Activated CD4-positive, alpha-beta memory T cell treated with anti-CD3 and anti-CD28 coated beads, Interleukin-2, amount 10 ng/mL, durations not matched to agents 7 days and 5 days (primary cell): ENCODE measurements at regions of chr5 and their contacts with region 1.

Region 1: GRCh38 chr5:83430130-83431010 is 41.2 kb upstream of the VCAN start:
- DNase-seq: peak; percentile 56
- H3K4me3 Mint-ChIP-seq: no peak overlapping the region
- H3K27ac Mint-ChIP-seq: no peak overlapping the region
- H3K4me1 Mint-ChIP-seq: no peaks in the 10 kb centered on the region
- H3K27me3 Mint-ChIP-seq: no peaks in the 10 kb centered on the region

Region 2: DNA sequence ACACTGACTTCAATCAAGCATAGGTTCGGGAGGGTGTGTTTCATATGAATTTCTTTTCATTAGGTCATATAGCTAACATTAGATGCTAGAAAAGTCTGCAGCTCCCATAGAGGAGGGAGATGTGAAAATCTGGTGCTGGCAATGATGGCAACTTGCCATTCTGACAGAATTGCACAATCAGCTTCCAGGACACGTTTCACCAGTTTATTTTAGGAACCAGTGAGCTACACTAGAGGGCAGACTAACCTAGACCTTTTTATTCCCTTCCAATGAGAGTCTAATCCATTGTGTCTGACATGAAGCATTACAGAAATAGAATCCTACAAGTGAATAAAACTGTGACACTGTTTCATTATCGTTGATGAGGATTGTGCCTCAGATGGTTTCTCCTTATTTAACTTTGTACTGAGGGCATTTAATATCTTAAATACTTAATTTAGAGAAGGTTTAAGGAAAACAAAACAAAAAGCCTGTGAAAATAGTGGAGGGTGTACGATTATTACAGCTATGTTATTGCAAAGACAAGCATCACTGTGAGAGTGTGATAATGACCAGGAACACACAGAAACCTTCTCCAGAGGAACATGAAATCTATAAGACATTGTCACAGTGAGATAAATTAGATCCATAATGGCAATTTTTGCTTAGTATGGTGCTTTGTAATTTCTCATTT is 788.9 kb before region 1 on chr5:
- CTCF ChIA-PET with region 1: interaction called, 10 read pairs
- POLR2A ChIA-PET with region 1: no interaction called
- DNase-seq: peak; percentile 19
- H3K4me3 Mint-ChIP-seq: no peak overlapping the region
- H3K27ac Mint-ChIP-seq: no peak overlapping the region
- H3K4me1 Mint-ChIP-seq: peaks cover 14% of the 10 kb centered on the region
- H3K27me3 Mint-ChIP-seq: peaks cover 6% of the 10 kb centered on the region

Region 3: DNA sequence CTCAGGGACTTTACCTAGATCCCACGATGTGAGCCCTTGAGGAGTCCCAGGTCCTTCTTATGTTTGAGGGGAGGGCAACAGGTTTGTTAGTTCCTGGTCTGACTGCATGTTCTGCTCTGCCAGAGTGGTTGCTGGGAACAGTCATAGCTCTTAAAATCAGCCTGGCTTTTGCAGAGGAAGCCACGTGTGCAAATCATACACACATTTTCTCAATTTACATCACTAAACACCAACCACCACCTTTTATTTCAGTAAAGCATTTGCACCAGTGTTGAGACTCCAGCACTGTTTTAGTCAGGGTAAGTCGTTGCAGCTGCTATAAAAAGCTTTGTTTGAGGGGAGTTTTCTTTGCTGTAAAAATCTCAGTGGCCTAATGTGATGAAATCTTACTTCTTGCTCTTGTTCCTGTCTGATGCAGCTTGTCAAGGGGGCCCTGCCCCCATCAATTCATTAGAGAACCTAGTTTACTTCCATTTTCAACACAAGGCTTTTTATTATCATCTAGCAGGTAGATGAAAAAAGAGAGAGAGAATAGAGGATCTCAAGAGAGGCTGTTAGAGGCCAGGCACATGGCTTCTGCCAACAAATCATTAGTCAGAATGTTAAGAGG is 29.1 kb before region 1 on chr5:
- CTCF ChIA-PET with region 1: no interaction called
- POLR2A ChIA-PET with region 1: no interaction called
- DNase-seq: no peak
- H3K4me3 Mint-ChIP-seq: no peak overlapping the region
- H3K27ac Mint-ChIP-seq: no peak overlapping the region
- H3K4me1 Mint-ChIP-seq: no peaks in the 10 kb centered on the region
- H3K27me3 Mint-ChIP-seq: no peaks in the 10 kb centered on the region